Tibial artery (tissue), 4 donors: ENCODE measurements at regions of chr5 and their contacts with region 1.

Region 1: DNA sequence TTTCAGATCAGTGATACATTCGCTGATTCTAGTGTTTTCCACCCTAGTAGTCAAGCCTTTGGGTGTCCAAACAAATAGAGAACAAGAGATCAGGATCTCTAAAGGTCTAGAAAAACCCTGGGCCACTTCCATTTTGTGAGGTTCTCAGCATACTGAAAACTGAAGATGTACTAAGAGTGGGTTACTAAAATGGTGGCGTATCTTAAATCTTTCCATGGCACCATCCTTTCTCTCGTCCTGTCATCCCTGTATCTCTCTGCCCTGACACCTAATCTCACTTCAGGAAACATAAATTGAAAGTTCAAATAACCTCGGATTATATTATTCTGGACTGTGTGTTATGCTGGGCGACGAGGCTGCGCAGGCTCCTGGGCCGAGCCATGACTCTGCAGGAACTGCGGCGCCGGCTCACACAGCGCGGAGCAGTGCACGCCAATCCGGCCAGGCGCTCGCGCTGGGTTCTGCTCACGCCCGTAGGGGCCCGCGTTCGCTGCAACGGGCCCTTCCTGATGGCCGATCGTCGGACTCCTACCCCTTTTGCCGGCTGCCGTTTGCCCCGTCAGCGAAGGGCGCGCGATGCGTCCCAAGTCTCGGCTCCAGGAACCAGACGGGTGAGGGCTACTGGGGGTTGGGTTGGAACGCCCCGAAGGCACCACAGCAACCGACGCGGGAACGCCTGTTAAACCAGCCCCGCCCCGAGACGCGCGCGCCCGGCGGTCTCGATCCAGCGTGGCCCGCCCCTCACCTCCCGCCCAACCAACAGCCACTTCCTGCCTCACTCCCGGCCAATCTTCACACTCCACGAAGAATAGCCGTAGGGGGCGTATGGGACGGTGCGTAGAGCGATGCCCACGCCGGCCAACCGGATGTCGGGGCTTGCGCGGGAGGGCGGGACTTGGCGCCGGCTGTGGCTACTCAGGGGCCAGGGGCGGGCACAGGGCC is 503 bp upstream of the CANX start:
- DNase-seq: peak; percentile 99 to 100
- H3K4me3 ChIP-seq: peak overlapping the region; percentile 93 to 98
- H3K27ac ChIP-seq: peak overlapping the region; percentile 99 to 100
- H3K4me1 ChIP-seq: peaks cover 0 to 39% (median 19%) of the 10 kb centered on the region in 4 donors
- H3K27me3 ChIP-seq: no peaks in the 10 kb centered on the region
- CTCF ChIP-seq: no peak

Region 2: DNA sequence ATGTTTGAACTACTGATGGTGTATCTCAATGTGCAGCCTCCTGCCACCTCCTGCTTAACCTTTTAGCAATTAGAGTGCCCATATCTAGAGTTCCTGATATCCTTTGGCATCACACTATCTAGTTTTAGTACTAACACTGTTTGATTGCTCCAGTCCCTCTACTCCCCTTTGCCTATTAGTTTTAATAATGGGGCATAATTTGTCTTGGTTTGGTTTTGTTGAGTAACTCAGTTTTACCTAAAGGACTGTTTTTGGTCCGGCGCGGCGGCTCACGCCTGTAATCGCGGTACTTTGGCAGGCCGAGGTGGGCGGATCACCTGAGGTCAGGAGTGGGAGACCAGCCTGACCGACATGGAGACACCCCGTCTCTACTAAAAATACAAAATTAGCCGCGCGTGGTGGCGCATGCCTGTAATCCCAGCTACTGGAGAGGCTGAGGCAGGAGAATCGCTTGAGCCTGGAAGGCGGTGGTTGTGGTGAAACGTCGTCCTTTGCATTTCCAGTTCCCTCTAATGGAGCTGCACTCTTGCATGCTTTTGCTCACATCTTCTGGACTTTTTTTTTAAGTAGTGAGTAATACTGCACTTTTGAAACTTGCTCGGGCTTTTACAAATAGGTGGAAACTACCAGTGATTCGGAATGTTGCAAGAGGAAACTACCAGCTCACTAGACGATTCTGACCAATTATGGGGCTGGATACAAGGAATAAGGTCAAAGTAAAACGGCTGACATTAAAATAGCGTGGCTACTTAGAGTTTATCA is 33.6 kb after region 1 on chr5:
- intact Hi-C with region 1: loop called (anchors 1 kb)
- DNase-seq: peak; percentile 35 to 68
- H3K4me3 ChIP-seq: peak overlapping the region; percentile 82 to 88
- H3K27ac ChIP-seq: peak overlapping the region; percentile 79 to 98
- H3K4me1 ChIP-seq: peaks cover 0 to 43% (median 35%) of the 10 kb centered on the region in 4 donors
- H3K27me3 ChIP-seq: no peaks in the 10 kb centered on the region
- CTCF ChIP-seq: no peak